ENCODE measurements at regions of chr2 and their contacts with region 1.

Region 1: DNA sequence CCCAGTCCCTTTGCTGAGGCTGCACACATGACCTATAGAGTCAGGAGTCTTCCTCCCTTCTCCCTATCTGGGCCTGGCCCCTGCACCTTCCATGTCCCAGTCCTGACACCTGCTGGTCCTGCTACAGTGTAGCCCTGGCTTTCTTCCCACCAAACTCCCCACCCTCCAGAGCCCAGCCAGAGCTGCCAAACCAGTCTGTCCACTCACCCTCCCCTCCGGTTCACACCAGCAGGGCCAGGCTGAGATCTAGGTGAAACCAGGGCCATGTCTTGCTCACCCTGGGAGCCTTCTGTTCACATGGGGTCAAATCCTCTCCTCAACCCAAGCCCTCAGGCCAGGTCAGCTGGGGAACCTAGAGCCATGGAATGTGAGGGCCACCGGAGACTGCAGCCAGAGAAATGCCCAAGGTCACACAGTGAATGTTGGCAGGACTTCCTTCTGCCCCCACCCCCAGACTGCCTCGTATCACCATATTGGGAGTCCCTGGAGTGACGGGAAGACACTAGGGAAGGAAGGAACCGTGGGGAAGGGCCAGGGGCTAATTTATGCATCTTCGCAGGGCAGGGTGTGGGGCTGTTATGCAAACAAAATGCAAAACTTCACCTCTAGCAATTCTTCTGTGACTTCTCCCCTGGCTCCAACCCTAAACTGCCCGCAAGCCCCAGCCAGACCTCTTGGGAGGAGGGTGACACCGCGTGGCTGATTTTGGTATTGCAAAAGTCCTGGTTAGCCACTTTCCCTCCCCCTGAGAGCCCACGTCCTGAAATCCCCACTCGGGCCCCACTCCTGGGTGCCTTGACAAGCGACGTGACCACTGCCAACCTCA is 14.6 kb downstream of the TNS1 start:
- DNase-seq: peak; percentile 82 to 94 (median 92)
- ATAC-seq: peak; percentile 80 to 85
- H3K4me3 ChIP-seq: no peak overlapping the region
- H3K27ac ChIP-seq: peak overlapping the region; percentile 63
- H3K4me1 ChIP-seq: peaks cover 7% of the 10 kb centered on the region
- H3K27me3 ChIP-seq: no peaks in the 10 kb centered on the region

Region 2: DNA sequence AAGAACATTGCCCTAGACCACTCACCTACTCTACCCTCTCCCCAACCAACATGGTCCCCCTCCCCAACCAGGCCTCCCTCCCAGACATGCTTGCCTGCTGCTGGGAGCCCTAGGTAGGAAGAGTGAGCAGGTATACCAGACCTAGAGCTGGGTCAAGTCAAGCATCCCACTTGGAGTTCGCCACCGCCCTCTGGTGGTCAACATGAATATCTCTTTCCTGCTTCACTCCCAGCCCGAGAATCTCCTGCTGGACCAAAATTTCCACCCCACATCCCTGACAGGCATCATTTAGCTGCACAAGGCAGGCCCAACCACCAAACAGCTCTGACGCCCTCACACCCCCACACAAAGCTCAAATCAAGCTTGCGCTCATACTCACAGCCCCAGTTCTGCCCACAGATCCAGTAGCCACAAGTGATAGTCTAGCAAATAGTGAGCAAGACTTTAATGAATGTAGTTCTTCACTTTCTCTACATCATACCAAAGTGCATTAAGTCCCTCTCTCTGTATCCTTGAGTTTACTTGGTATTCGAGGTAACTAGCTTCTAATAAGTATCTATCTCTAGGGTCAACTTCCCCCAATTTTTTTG is 101.4 kb before region 1 on chr2:
- intact Hi-C with region 1: loop called (anchors 5 to 10 kb)
- DNase-seq: peak; percentile 79 to 85 (median 80)
- ATAC-seq: peak; percentile 26 to 28
- H3K4me3 ChIP-seq: no peak overlapping the region
- H3K27ac ChIP-seq: peak overlapping the region; percentile 42
- H3K4me1 ChIP-seq: peaks cover 31% of the 10 kb centered on the region
- H3K27me3 ChIP-seq: no peaks in the 10 kb centered on the region

Region 3: DNA sequence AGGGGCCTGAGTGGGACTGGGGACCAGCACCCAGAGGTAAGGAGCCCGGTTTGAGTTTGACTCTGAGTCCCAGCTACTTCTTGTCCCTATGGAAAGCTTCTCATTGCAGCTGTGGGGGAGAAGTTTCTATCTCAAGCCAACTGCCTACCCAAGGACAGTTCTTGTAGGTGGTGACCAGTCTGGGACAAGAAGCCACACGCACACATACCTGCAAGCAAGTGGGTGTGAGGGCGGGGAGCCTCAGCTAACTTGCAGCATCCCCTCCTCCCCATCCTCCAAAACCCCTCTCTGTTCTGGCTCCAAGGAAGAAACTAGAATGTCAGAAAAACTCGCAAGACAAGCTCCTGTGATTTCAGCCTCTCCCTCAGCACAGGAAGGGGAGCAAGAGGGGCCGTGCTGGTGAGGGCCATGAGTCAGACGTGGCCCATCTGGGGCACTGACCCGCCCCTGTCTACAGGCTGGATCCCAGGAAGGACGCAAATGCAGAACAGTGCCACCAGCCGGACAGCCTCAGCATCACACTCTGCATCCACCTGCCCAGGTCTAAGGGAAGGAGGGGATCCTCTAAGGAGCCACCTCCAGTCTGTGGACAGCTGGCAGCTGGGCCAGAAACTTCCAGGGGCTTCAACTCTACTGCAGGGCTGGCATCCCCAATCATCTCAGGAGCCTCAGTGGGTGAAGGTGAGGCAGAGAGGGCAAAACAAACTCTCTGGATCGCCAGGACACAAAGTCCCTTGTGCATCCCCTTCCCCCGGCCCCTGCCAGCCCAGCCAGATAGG is 88.8 kb before region 1 on chr2:
- intact Hi-C with region 1: loop called in 2 of 4 experiments (anchors 5 to 10 kb)
- DNase-seq: peak; percentile 80 to 86 (median 84)
- ATAC-seq: peak; percentile 12 to 28
- H3K4me3 ChIP-seq: no peak overlapping the region
- H3K27ac ChIP-seq: peak overlapping the region; percentile 88
- H3K4me1 ChIP-seq: peaks cover 63% of the 10 kb centered on the region
- H3K27me3 ChIP-seq: no peaks in the 10 kb centered on the region

Region 4: GRCh38 chr2:218033590-218034496 is 45.6 kb after region 1 on chr2:
- intact Hi-C with region 1: loop called in 2 of 4 experiments (anchors 5 to 10 kb)
- DNase-seq: peak in 2 of 3 donors; percentile 78 to 79
- ATAC-seq: peak; percentile 15 to 58
- H3K4me3 ChIP-seq: no peak overlapping the region
- H3K27ac ChIP-seq: no peak overlapping the region
- H3K4me1 ChIP-seq: peaks cover 5% of the 10 kb centered on the region
- H3K27me3 ChIP-seq: no peaks in the 10 kb centered on the region